ENCODE measurements at regions of chr19 and their contacts with region 1.

Region 1: GRCh38 chr19:7970716-7971448 is 27.4 kb upstream of the TIMM44 start:
- DNase-seq: peak; percentile 28
- H3K4me3 Mint-ChIP-seq: no peak overlapping the region
- H3K27ac Mint-ChIP-seq: no peak overlapping the region
- H3K4me1 Mint-ChIP-seq: peaks cover 1% of the 10 kb centered on the region
- H3K27me3 Mint-ChIP-seq: no peaks in the 10 kb centered on the region

Region 2: GRCh38 chr19:8005534-8006256 is 34.8 kb after region 1 on chr19 and contains the start of gene ELAVL1:
- CTCF ChIA-PET with region 1: interaction called, 25 read pairs
- POLR2A ChIA-PET with region 1: no interaction called
- DNase-seq: peak; percentile 90
- H3K4me3 Mint-ChIP-seq: peak within 1 kb of the TSS; percentile 86
- H3K27ac Mint-ChIP-seq: peak within 1 kb of the TSS; percentile 85
- H3K4me1 Mint-ChIP-seq: peaks cover 35% of the 10 kb centered on the region
- H3K27me3 Mint-ChIP-seq: no peaks in the 10 kb centered on the region
- total RNA-seq, gene ELAVL1: 93.6 to 102 TPM

Measured in activated CD4-positive, alpha-beta memory T cell treated with anti-CD3 and anti-CD28 coated beads, Interleukin-2, amount 10 ng/mL, durations not matched to agents 7 days and 5 days (primary cell).